Cardiac septum (tissue), 1 donor: ENCODE measurements at regions of chr6 and their contacts with region 1.

Region 1: GRCh38 chr6:156427345-156427744 is 349.8 kb upstream of the ARID1B start:
- DNase-seq: no peak

Region 2: GRCh38 chr6:156028335-156029131 is 398.8 kb before region 1 on chr6:
- intact Hi-C with region 1: loop called (anchors 10 kb)
- DNase-seq: no peak

Region 3: DNA sequence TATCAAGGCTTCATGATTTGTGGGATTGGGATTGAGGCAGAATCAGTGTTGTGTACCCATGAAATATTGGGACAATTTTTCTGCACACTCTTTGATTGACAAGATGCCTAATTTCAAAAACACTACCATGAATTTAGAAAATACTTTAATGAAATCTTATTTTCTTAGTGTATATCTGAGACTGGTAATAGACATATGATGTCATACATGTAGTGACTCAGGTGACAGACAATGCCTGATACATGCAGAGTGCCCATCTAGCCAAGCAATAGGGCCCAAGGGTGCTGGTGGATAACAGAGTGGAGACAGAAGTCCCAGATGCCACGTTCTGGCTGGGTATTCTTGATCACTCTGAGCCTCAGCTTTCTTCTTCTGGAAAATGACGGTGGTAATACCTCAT is 70.3 kb after region 1 on chr6:
- intact Hi-C with region 1: no loop called
- DNase-seq: no peak